WTC11 (cell line): ENCODE measurements at regions of chr17 and their contacts with region 1.

Region 1: DNA sequence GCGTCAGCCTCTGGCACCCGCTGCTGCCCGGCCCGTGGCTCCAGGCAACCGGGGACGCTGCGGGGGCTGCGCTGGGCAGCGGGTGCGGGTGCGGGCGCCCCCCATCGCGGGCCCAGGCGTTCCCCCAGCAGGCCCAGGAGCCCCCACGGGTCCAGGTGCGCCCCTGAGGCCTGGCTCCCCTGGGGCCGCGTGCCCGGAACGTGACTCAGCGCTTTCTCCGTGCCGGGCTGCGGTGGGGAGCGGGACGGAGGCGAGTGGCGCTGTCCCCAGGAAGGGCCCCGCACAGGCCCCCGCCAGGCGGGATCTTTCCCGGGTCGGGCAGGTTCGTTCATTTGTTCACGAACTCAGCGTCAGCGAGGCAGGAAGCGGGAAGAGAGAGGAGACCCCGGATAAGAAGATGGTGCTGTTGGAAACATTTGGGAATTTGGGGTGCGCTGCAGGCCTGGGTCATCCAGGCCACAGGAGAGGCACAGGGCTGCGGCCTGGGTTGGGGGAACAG is 18.4 kb upstream of the EXOC7 start:
- DNase-seq: peak; percentile 54
- ATAC-seq: peak; percentile 5; the same call in 1 of the 2 replicates
- H3K4me3 Mint-ChIP-seq: no peak overlapping the region; the same call in 1 of the 2 replicates
- H3K27ac Mint-ChIP-seq: peak overlapping the region; percentile 19; the same call in 1 of the 2 replicates
- H3K4me1 Mint-ChIP-seq: peaks cover 39% of the 10 kb centered on the region
- H3K27me3 Mint-ChIP-seq: no peaks in the 10 kb centered on the region; the same call in none of the 2 replicates
- CTCF ChIP-seq: no peak

Region 2: DNA sequence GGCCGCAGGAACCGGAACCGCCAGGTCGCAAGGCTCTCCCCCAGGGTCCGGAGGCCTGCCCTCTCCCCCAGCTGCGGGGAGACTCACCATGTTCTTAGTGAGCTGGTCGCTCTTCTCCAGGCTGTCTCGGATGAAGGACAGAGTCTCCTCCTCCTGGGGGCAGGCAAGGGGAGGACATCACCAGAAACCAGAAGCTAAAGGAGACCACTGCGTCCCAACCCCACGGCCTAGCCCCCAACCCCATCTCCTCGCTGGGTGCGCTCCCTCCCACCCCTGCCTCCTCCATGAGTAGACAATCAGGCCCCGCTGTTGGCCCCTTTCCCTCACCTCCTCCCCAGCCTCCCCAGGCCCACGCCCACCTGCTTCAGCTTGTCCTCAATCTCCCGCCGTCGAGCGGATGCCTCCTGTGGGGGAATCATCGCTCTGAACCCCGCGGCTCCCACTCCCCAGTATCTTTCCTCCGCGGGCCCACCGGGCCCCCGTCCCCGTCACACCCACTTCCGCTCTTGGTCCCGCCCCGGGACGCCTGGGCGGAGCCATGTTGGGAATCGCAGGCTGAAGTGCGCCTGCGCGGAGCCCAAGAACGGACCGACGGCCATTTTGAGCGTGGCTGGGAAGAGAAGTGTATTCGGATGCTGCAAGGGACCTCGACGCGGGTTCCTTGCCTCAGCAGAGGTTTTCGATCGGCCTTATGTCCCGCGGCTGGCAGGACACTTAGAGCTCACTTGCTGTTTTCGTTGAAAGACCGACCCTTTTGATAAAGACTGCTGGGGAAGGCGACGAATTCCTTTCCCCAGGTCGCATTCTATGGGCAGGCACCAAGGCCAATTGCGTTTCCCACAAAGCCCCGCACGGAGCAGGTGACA is 18.5 kb before region 1 on chr17 and contains the start of gene EXOC7:
- CTCF ChIA-PET with region 1: interaction called, 28 read pairs
- POLR2A ChIA-PET with region 1: interaction called, 5 read pairs
- DNase-seq: peak; percentile 92
- ATAC-seq: peak; percentile 72
- H3K4me3 Mint-ChIP-seq: peak within 1 kb of the TSS; percentile 88
- H3K27ac Mint-ChIP-seq: peak within 1 kb of the TSS; percentile 97
- H3K4me1 Mint-ChIP-seq: peaks cover 28% of the 10 kb centered on the region
- H3K27me3 Mint-ChIP-seq: no peaks in the 10 kb centered on the region; the same call in 1 of the 2 replicates
- CTCF ChIP-seq: no peak
- total RNA-seq, gene EXOC7: 90.0 to 126 TPM (median 96.2 TPM) in 3 replicates

Region 3: DNA sequence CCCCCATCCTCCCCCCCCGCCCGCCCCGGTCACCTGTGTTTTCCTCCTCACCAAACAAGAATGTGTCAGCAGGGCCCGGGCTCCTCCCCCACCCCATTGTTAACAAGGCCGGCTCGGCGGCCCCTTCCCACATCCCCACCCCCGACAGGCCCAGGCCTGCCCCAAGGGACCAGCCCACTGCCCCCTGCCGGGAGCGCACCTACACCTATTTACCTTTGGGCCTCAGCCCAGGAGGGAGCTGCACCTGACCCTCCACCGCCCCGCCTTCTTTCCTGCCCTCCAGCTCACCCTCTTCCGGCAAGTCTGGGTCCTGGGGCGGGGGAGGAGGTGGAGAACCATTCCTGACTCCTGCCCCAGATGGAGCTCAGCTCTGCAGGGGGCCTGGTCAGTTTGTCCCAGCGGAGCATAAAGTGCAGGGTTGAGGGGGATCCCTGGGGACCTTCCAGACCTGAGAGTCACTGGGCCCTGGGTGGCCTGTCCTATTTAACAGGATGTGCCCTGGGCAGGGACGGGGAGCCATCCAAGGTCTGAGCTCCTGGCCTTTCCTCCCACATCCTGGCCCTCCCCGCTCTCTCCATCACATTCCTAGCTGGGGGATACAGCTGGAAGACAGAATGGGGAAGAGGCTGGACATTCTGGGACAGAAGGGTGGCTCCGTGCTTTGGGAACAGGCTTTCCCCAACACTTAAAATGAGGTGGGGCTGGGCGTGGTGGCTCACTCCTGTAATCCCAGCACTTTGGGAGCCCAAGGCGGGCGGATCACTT is 10.8 kb after region 1 on chr17:
- CTCF ChIA-PET with region 1: interaction called, 176 read pairs
- POLR2A ChIA-PET with region 1: interaction called, 17 read pairs
- DNase-seq: peak; percentile 83
- ATAC-seq: peak; percentile 30
- H3K4me3 Mint-ChIP-seq: peak overlapping the region; percentile 55
- H3K27ac Mint-ChIP-seq: peak overlapping the region; percentile 71
- H3K4me1 Mint-ChIP-seq: peaks cover 63% of the 10 kb centered on the region
- H3K27me3 Mint-ChIP-seq: peaks cover 41% of the 10 kb centered on the region
- CTCF ChIP-seq: no peak

Region 4: GRCh38 chr17:76141212-76142038 is 19.4 kb after region 1 on chr17 and contains the start of gene FOXJ1:
- CTCF ChIA-PET with region 1: interaction called, 176 read pairs
- POLR2A ChIA-PET with region 1: interaction called, 4 read pairs
- DNase-seq: peak; percentile 97
- ATAC-seq: peak; percentile 61
- H3K4me3 Mint-ChIP-seq: peak within 1 kb of the TSS; percentile 82
- H3K27ac Mint-ChIP-seq: no peak within 1 kb of the TSS
- H3K4me1 Mint-ChIP-seq: peaks cover 81% of the 10 kb centered on the region
- H3K27me3 Mint-ChIP-seq: peaks cover 67% of the 10 kb centered on the region
- CTCF ChIP-seq: no peak
- total RNA-seq, gene FOXJ1: 6.2 to 11.8 TPM (median 6.8 TPM) in 3 replicates

Region 5: GRCh38 chr17:76153640-76154039 is 31.7 kb after region 1 on chr17:
- CTCF ChIA-PET with region 1: interaction called, 68 read pairs
- POLR2A ChIA-PET with region 1: no interaction called
- DNase-seq: no peak
- ATAC-seq: peak; percentile 28; the same call in 1 of the 2 replicates
- H3K4me3 Mint-ChIP-seq: no peak overlapping the region
- H3K27ac Mint-ChIP-seq: no peak overlapping the region
- H3K4me1 Mint-ChIP-seq: peaks cover 32% of the 10 kb centered on the region
- H3K27me3 Mint-ChIP-seq: no peaks in the 10 kb centered on the region
- CTCF ChIP-seq: no peak

Region 6: GRCh38 chr17:76264755-76265596 is 143.0 kb after region 1 on chr17 and contains the start of gene UBALD2:
- CTCF ChIA-PET with region 1: interaction called, 10 read pairs
- POLR2A ChIA-PET with region 1: interaction called, 5 read pairs
- DNase-seq: peak; percentile 99
- ATAC-seq: peak; percentile 95
- H3K4me3 Mint-ChIP-seq: peak within 1 kb of the TSS; percentile 71
- H3K27ac Mint-ChIP-seq: peak within 1 kb of the TSS; percentile 80
- H3K4me1 Mint-ChIP-seq: peaks cover 43% of the 10 kb centered on the region
- H3K27me3 Mint-ChIP-seq: no peaks in the 10 kb centered on the region
- CTCF ChIP-seq: no peak
- total RNA-seq, gene UBALD2: 24.4 to 30.3 TPM (median 28.2 TPM) in 3 replicates